ENCODE measurements at regions of chr1 and their contacts with region 1.

Region 1: DNA sequence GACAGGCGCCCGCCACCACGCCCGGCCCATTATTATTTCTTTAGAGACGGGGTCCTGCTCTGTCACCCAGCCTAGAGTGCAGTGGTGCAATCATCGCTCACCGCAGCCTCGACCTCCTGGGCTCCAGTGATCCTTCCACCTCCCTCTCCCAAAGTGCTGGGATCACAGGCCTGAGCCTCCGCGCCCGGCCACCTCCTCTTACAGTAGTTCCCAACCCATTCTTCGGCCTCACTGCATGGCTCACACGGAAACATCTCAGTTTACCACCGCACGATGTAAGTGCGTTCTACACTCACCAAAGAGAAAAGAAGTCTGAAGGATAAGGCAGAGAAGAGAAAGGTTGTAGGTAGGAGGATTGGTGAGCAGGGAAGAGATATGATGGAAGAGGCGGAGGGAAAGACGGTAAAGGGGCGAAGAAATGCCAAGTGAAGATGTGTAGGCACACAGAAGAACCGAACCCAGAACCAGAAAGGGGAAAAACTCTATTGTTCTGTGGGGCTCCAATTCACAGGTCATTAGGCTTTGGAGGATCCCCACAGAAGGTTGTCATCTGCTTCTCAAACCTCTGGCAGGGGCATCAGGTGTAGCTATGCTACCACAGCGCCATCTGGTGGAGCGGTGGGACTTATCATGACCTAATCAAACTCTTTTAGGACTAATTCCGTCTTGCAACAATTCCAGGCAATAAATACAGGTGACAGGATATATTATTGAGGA is 504.2 kb downstream of the SMYD3 start:
- DNase-seq: peak; percentile 84 to 85
- ATAC-seq: peak; percentile 60 to 86 (median 80)
- H3K4me3 ChIP-seq: no peak overlapping the region
- H3K27ac ChIP-seq: no peak overlapping the region
- H3K4me1 ChIP-seq: peaks cover 0 to 9% (median 4%) of the 10 kb centered on the region in 9 donors
- H3K27me3 ChIP-seq: no peaks in the 10 kb centered on the region
- CTCF ChIP-seq: peak; percentile 82 to 92 (median 90)

Region 2: GRCh38 chr1:245322673-245323441 is 680.0 kb before region 1 on chr1:
- intact Hi-C with region 1: loop called in 1 of 10 experiments (anchors 10 kb)
- DNase-seq: no peak
- ATAC-seq: no peak
- H3K4me3 ChIP-seq: no peak overlapping the region
- H3K27ac ChIP-seq: no peak overlapping the region
- H3K4me1 ChIP-seq: peaks cover 0 to 10% (median 0%) of the 10 kb centered on the region in 9 donors
- H3K27me3 ChIP-seq: peaks cover 0 to 5% (median 0%) of the 10 kb centered on the region in 7 donors
- CTCF ChIP-seq: peak in 3 of 9 donors; percentile 11 to 24 (median 23)

Region 3: GRCh38 chr1:245380790-245381535 is 621.9 kb before region 1 on chr1:
- intact Hi-C with region 1: loop called in 1 of 10 experiments (anchors 10 kb)
- DNase-seq: no peak
- ATAC-seq: peak in 1 of 8 donors; percentile 24
- H3K4me3 ChIP-seq: no peak overlapping the region
- H3K27ac ChIP-seq: no peak overlapping the region
- H3K4me1 ChIP-seq: no peaks in the 10 kb centered on the region
- H3K27me3 ChIP-seq: peaks cover 0 to 10% (median 2%) of the 10 kb centered on the region in 7 donors
- CTCF ChIP-seq: peak; percentile 7 to 59 (median 44)

Region 4: DNA sequence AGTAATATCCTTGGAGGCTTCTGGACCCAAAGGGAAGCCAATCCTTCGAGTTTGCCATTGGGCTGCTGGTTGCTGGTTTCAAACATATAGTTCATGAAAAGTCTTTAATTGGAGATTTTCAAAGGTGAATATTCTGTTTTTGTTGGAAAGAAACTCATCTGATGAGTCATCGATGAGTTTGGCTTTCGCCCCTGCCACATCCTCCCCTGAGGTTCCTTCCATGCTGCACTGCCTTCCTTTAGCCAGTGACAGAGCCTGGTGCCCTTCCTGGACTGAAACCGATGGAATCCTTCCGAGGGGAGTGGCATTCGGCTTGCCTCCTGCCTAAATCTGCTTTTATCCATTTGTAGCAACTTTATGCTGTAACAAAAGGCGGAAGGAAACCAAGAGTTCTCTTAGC is 298.1 kb before region 1 on chr1:
- intact Hi-C with region 1: no loop called
- DNase-seq: no peak
- ATAC-seq: no peak
- H3K4me3 ChIP-seq: no peak overlapping the region
- H3K27ac ChIP-seq: no peak overlapping the region
- H3K4me1 ChIP-seq: peaks cover 0 to 9% (median 0%) of the 10 kb centered on the region in 9 donors
- H3K27me3 ChIP-seq: no peaks in the 10 kb centered on the region
- CTCF ChIP-seq: no peak

Region 5: GRCh38 chr1:245837718-245838117 is 165.2 kb before region 1 on chr1:
- intact Hi-C with region 1: loop called in 1 of 10 experiments (anchors 10 kb)
- DNase-seq: no peak
- ATAC-seq: no peak
- H3K4me3 ChIP-seq: no peak overlapping the region
- H3K27ac ChIP-seq: no peak overlapping the region
- H3K4me1 ChIP-seq: no peaks in the 10 kb centered on the region
- H3K27me3 ChIP-seq: no peaks in the 10 kb centered on the region
- CTCF ChIP-seq: no peak

Region 6: DNA sequence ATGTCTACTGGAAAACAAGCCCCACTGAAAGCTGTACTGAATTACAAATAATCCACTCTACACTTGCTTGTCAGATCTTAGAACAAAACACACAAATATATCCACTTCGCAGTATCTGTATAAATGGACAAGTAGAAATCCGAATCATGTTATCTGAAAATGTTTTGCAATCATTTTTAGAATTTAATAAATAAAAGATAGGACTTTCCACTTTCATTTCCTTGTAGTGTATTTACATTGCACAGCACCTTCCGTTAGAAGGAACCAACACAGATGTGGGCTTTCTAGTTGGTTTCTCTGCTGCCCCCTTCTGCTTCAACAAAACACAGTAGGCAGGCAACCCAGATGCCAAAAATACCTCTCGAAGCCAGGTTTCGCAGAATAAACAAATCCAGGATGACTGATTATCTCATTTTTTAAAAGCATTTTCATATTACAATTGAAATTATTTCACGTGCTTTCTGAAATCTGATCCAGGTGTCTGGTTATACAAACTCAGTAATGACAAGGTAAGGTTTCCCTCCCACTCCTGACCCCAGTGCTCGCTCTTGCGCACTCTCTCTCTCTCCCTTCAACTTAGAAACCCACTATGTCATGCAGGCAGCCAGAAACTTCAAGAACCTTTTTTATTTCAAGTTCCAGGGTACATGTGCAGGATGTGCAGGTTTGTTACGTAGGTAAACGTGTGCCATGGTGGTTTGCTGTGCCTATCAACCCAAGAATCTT is 114.3 kb after region 1 on chr1:
- intact Hi-C with region 1: loop called in 1 of 10 experiments (anchors 5 kb)
- DNase-seq: peak in 1 of 2 donors; percentile 21
- ATAC-seq: peak in 4 of 8 donors; percentile 59 to 73 (median 64)
- H3K4me3 ChIP-seq: no peak overlapping the region
- H3K27ac ChIP-seq: no peak overlapping the region
- H3K4me1 ChIP-seq: peaks cover 0 to 10% (median 0%) of the 10 kb centered on the region in 9 donors
- H3K27me3 ChIP-seq: no peaks in the 10 kb centered on the region
- CTCF ChIP-seq: peak in 7 of 9 donors; percentile 35 to 66 (median 57)